CD14-positive monocyte (primary cell): ENCODE measurements at regions of chr12 and their contacts with region 1.

Region 1: GRCh38 chr12:9961106-9961505 is 10.1 kb upstream of the CLEC12A start:
- DNase-seq: no peak
- H3K4me3 ChIP-seq: peak overlapping the region in 1 of 3 experiments; percentile 52
- H3K4me3 Mint-ChIP-seq: no peak overlapping the region
- H3K27ac ChIP-seq: peak overlapping the region; percentile 56 to 86
- H3K27ac Mint-ChIP-seq: peak overlapping the region; percentile 84 to 94 (median 92)
- H3K4me1 ChIP-seq: peaks cover 49 to 74% of the 10 kb centered on the region in 2 donors
- H3K4me1 Mint-ChIP-seq: peaks cover 55% of the 10 kb centered on the region
- H3K27me3 ChIP-seq: no peaks in the 10 kb centered on the region
- H3K27me3 Mint-ChIP-seq: no peaks in the 10 kb centered on the region
- CTCF ChIP-seq: no peak

Region 2: DNA sequence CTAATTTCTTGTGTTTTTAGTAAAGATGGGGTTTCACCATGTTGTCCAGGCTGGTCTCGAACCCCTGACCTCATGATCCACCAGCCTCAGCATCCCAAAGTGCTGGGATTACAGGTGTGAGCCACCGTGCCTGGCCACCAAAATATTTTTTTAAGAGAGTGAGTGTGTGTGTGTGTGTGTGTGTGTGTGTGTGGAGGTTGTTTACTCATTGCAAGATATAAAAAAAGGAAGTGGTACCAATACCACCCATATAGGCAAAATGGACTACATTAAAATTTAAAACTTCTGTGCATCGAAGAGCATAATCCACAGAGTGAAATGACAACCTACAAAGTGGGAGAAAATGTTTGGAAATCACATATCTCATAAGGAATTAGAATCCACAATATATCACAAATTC is 13.4 kb before region 1 on chr12:
- intact Hi-C with region 1: loop called in 1 of 2 experiments (anchors 2 kb)
- DNase-seq: peak in 1 of 3 donors; percentile 42
- H3K4me3 ChIP-seq: peak overlapping the region in 1 of 3 experiments; percentile 57
- H3K4me3 Mint-ChIP-seq: peak overlapping the region in 1 of 2 donors; percentile 24
- H3K27ac ChIP-seq: peak overlapping the region in 1 of 2 donors; percentile 80
- H3K27ac Mint-ChIP-seq: peak overlapping the region; percentile 79 to 91 (median 84)
- H3K4me1 ChIP-seq: peaks cover 63 to 85% of the 10 kb centered on the region in 2 donors
- H3K4me1 Mint-ChIP-seq: peaks cover 74% of the 10 kb centered on the region
- H3K27me3 ChIP-seq: no peaks in the 10 kb centered on the region
- H3K27me3 Mint-ChIP-seq: peaks cover 0 to 5% (median 0%) of the 10 kb centered on the region in 3 donors
- CTCF ChIP-seq: no peak

Region 3: GRCh38 chr12:10140001-10140400 is 178.9 kb after region 1 on chr12:
- intact Hi-C with region 1: no loop called
- DNase-seq: peak; percentile 72 to 81 (median 75)
- H3K4me3 ChIP-seq: no peak overlapping the region
- H3K4me3 Mint-ChIP-seq: no peak overlapping the region
- H3K27ac ChIP-seq: no peak overlapping the region
- H3K27ac Mint-ChIP-seq: peak overlapping the region; percentile 5 to 73 (median 49)
- H3K4me1 ChIP-seq: peaks cover 6 to 7% of the 10 kb centered on the region in 2 donors
- H3K4me1 Mint-ChIP-seq: peaks cover 14% of the 10 kb centered on the region
- H3K27me3 ChIP-seq: no peaks in the 10 kb centered on the region
- H3K27me3 Mint-ChIP-seq: peaks cover 2 to 5% (median 3%) of the 10 kb centered on the region in 3 donors
- CTCF ChIP-seq: peak; percentile 82